Posterior vena cava (tissue), 2 donors: ENCODE measurements at regions of chr22 and their contacts with region 1.

Region 1: DNA sequence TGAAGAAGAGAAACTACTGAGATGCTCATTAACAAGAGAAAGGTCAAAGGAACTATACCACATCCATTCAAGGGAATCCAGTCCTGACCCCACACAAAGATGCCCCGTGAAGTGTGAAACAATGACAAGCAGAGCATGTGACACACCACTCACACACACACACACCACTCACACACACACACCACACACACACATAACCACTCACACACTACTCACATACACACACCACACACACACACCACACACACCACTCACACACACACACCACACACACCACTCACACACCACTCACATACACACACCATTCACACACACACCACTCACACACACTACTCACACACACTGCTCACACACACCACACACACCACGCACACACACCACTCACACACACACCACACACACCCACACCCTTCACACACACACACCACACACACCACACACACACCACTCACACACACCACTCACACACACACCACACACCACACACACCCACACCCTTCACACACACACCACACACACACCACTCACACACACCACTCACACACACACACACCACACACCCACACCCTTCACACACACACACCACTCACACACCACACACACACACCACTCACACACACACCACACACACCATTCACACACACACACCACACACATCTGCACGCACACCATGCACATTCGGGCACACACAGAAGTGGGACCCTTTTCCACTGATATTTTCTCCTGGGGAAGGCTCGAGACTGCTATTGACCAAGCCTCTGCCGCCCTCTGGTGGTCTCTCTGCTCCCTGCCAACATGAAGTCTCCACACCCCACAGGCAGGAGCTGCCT is 32.0 kb upstream of the COMT start:
- DNase-seq: peak; percentile 93

Region 2: GRCh38 chr22:19730655-19731360 is 178.8 kb before region 1 on chr22:
- intact Hi-C with region 1: loop called (anchors 2 kb)
- DNase-seq: peak; percentile 96

Region 3: GRCh38 chr22:19878441-19879247 is 30.9 kb before region 1 on chr22:
- intact Hi-C with region 1: loop called in 1 of 2 experiments (anchors 1 kb)
- DNase-seq: peak; percentile 68

Region 4: DNA sequence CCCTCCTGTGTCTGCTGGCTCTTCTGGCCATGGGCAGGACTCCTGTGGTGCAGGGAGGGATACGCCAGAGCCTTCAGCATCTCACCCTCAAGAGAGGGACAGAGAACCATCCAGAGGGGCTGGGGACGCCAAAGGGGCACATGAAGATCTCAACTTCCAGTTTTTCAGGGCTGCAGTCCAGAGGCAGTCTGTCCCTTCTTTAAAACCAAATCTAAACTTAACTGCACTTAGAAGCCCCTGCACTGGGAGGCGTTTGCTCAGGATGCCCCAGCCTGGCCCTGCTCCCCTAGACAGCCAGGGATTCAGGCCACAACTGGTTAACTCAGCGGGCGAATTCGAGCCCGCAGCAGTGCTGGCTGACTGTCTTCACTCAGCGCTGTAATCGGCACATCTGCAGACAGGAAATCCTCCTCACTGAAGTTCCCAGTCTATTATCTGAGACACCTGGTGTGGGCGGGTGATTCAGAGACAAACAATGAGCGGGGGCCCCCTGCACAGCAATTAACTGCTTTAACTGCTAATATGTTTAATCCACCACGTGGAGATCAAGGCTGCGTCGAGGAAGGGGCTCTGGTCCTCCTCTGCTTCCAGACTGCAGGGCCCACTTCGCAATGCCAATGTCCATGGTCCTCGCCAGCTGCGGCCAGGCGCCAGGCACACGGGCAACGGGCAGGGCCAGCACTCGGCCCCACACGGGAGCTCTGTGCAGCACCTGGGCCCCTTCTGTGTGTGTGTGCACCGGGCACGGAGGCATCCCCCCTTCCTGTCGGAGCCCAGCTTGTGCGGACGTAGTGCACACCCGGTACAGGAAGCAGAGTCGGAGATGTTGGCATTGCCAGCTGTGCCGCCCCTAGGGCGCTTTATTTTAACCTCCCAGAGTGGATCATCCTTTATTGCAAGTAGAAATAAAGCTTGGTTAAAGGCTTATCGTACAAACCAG is 18.0 kb before region 1 on chr22:
- intact Hi-C with region 1: no loop called
- DNase-seq: no peak